ENCODE measurements at regions of chr9 and their contacts with region 1.

Region 1: DNA sequence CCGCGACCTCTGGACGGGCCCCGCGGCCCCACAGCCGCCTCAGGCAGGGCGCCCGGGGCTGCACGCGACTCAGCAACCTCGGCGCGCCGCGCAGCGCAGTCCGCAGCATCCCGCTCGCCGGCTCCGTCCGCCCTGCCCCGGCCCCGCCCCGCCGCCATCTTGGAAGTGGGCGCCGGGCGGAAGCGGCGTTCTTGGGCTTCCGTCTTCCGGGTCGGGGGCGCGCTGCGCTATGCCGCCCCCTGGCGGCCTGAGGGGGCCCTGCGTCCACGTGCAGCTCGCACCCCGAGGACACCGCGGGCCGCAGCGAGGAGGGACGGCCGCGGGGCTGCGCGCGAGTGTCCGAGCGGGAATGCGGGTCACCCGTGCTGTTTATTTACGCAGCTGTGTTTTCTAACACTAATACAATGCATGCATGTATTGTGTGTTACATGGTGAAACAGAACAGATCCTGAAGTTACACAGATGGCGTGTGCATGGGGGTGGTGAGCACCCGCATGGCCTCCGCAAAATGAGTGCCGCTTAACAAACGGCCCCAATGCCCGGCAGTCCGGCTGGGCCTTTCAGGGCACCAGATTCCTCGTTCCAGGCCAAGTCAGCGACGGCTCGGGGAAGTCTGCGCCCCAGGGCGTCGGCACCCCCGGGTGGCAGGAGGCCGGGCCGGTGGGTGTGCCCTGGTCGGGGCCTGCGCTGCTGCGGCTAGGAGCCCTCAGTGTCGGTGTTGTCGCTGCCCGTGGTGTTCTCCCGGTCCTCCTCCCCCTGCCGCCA is at the start of gene DNLZ:
- DNase-seq: peak; percentile 93
- ATAC-seq: peak; percentile 73
- H3K4me3 Mint-ChIP-seq: peak within 1 kb of the TSS; percentile 79
- H3K27ac Mint-ChIP-seq: peak within 1 kb of the TSS; percentile 80
- H3K4me1 Mint-ChIP-seq: peaks cover 10% of the 10 kb centered on the region
- H3K27me3 Mint-ChIP-seq: no peaks in the 10 kb centered on the region
- total RNA-seq, gene DNLZ: 11.7 to 12.8 TPM

Region 2: GRCh38 chr9:136089697-136090045 is 274.1 kb before region 1 on chr9:
- CTCF ChIA-PET with region 1: no interaction called
- POLR2A ChIA-PET with region 1: no interaction called
- intact Hi-C with region 1: no loop called
- DNase-seq: no peak
- ATAC-seq: no peak
- H3K4me3 Mint-ChIP-seq: no peak overlapping the region
- H3K27ac Mint-ChIP-seq: no peak overlapping the region
- H3K4me1 Mint-ChIP-seq: peaks cover 8% of the 10 kb centered on the region
- H3K27me3 Mint-ChIP-seq: no peaks in the 10 kb centered on the region

Region 3: DNA sequence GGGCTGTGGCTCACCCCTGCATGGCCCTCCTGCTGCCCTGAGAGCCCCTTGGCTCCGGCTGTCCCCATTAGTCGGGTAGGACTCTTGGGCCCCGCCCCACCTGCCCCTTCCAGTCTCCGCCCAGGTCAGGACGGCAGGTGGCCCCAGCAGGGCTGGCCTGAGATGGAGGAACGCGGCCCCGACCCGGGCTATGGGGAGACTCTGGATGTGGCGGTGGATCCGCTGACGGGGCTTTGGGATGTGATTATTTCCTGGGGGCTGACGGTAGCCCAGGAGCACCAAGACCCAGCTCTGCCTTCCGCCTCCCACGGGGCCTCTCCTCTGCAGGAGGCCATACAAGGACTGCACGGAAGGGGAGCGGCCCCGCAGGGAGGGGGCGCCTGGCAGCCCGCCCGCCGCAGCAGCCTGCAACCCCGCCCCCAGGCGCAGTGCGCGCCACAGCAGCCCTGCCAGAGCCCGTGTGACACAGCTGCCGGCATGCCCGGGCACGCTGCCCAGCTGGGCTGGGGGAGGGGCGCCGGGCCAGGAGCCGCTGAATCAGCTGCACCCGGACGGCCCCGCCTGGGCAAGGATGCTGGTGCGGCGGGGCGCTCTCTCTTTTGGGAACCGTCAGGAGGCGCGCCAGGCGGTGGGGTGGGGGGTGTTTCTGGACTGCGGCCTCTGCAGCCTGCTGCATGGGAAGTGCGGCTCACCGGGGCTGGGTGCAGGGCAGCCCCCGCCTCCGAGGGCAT is 254.3 kb before region 1 on chr9:
- CTCF ChIA-PET with region 1: no interaction called
- POLR2A ChIA-PET with region 1: no interaction called
- intact Hi-C with region 1: loop called (anchors 1 to 5 kb)
- DNase-seq: peak; percentile 97
- ATAC-seq: peak; percentile 88
- H3K4me3 Mint-ChIP-seq: peak overlapping the region; percentile 78
- H3K27ac Mint-ChIP-seq: peak overlapping the region; percentile 97
- H3K4me1 Mint-ChIP-seq: peaks cover 71% of the 10 kb centered on the region
- H3K27me3 Mint-ChIP-seq: no peaks in the 10 kb centered on the region

Region 4: DNA sequence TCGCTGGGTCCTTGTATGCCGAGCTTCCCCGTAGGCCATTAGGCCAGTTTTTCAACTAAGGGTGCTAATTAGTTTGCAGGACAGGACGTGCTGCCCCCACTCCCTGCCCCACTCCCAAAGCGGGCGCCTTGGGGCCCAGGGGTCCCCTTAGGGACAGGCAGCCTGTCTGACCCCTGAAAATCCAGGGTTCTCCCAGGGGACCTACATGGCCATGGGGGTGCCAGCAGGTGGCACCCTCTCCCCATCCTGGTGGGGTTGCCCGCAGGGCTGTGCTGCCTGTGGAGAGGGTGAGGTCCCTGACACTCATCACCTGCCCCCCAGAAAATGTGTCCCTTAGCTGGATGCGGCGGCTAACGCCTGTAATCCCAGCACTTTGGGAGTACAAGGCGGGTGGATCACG is 51.4 kb before region 1 on chr9:
- CTCF ChIA-PET with region 1: no interaction called
- POLR2A ChIA-PET with region 1: no interaction called
- intact Hi-C with region 1: loop called in 1 of 2 experiments (anchors 1 kb)
- DNase-seq: peak; percentile 74
- ATAC-seq: peak; percentile 80
- H3K4me3 Mint-ChIP-seq: no peak overlapping the region
- H3K27ac Mint-ChIP-seq: no peak overlapping the region
- H3K4me1 Mint-ChIP-seq: no peaks in the 10 kb centered on the region
- H3K27me3 Mint-ChIP-seq: no peaks in the 10 kb centered on the region

Region 5: GRCh38 chr9:136336156-136336870 is 27.5 kb before region 1 on chr9:
- CTCF ChIA-PET with region 1: no interaction called
- POLR2A ChIA-PET with region 1: no interaction called
- intact Hi-C with region 1: no loop called
- DNase-seq: no peak
- ATAC-seq: no peak
- H3K4me3 Mint-ChIP-seq: no peak overlapping the region
- H3K27ac Mint-ChIP-seq: no peak overlapping the region
- H3K4me1 Mint-ChIP-seq: no peaks in the 10 kb centered on the region
- H3K27me3 Mint-ChIP-seq: no peaks in the 10 kb centered on the region

Region 6: GRCh38 chr9:136410500-136411287 is 46.9 kb after region 1 on chr9 and contains the starts of genes ENTR1 and PMPCA:
- CTCF ChIA-PET with region 1: interaction called, 3 read pairs
- POLR2A ChIA-PET with region 1: no interaction called
- intact Hi-C with region 1: loop called in 1 of 2 experiments (anchors 1 kb)
- DNase-seq: peak; percentile 98
- ATAC-seq: peak; percentile 75
- H3K4me3 Mint-ChIP-seq: peak within 1 kb of the TSS; percentile 90
- H3K27ac Mint-ChIP-seq: peak within 1 kb of the TSS; percentile 94
- H3K4me1 Mint-ChIP-seq: peaks cover 49% of the 10 kb centered on the region
- H3K27me3 Mint-ChIP-seq: no peaks in the 10 kb centered on the region
- total RNA-seq, gene ENTR1: 57.2 to 67.7 TPM
- total RNA-seq, gene PMPCA: 88.0 to 113 TPM

Region 7: GRCh38 chr9:136527721-136528691 is 164.2 kb after region 1 on chr9:
- CTCF ChIA-PET with region 1: no interaction called
- POLR2A ChIA-PET with region 1: no interaction called
- intact Hi-C with region 1: no loop called
- DNase-seq: peak; percentile 41
- ATAC-seq: no peak
- H3K4me3 Mint-ChIP-seq: no peak overlapping the region
- H3K27ac Mint-ChIP-seq: no peak overlapping the region
- H3K4me1 Mint-ChIP-seq: peaks cover 24% of the 10 kb centered on the region
- H3K27me3 Mint-ChIP-seq: no peaks in the 10 kb centered on the region

Region 8: DNA sequence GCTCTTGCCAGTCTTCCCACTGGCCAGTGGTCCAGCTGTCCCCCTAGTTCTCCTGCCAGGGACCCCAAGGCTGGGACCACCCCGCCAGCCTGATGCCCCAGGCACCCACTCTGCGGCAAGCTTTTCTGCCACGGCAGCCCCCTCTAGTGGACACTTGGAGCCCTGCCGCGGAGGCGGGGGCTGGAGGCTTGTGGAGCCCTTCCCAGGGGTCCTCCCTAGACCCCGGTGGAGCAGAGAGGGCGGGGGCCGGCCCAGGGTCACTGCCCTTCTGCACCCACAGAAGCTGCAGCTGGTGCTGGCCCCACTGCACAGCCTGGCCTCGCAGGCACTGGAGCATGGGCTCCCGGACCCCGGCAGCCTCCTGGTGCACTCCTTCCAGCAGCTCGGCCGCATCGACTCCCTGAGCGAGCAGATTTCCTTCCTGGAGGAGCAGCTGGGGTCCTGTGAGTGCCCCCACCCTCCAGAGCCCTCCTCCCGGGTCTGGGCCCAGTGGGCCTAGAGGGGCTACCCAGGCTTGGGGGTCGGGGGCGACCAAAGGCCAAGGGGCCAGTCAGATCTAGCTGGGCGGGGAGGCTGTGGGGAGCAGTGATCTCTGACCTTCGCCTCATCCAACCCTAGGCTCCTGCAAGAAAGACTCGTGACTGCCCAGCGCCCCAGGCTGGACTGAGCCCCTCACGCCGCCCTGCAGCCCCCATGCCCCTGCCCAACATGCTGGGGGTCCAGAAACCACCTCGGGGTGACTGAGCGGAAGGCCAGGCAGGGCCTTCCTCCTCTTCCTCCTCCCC is 308.1 kb after region 1 on chr9:
- CTCF ChIA-PET with region 1: no interaction called
- POLR2A ChIA-PET with region 1: no interaction called
- intact Hi-C with region 1: no loop called
- DNase-seq: peak; percentile 70
- ATAC-seq: no peak
- H3K4me3 Mint-ChIP-seq: no peak overlapping the region
- H3K27ac Mint-ChIP-seq: no peak overlapping the region
- H3K4me1 Mint-ChIP-seq: no peaks in the 10 kb centered on the region
- H3K27me3 Mint-ChIP-seq: peaks cover 2% of the 10 kb centered on the region

Region 9: DNA sequence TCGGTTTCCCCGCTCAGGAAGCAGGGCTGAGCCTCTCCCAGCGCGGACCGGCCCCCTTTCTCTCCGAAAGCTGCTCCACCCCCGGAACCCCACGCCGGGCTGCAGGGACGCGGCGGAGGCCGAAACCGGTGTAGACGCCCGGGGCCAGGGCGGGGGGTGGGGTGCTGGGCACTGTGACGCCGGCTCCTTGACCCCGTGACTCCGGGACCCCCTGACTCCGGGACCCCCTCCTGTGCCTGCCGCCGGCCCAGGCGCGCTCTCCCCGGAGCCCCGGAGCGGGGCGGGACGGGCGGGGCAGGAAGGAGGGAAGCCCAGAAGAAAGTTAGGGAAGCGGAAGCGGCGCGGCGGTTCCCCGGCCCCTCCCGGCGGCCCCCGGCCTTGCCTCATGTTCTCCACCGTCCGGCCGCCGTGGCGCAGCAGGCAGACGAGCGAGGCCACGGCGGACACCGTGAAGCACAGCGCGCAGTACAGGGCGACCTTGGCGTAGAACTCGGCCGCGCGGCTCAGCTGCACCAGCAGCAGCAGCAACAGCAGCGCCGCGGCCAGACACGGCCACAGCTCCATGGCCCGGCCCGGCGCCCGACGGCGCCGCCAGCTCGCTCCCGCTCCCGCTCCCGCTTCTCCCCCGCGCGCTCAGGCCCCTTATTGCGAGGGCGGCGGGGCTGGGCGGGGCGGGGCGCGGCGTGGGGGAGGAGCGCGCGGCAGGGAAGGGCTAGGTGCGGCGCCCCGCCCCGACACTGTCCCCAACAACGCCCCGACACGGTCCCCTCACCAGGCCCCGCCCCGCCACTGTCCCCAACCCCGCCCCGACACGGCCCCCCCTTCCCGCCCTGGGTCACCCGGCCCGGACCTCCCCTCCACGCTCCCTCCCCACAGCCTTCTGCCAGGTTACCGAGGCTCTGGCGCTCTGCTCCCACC is 323.3 kb after region 1 on chr9 and contains the start of gene AGPAT2:
- CTCF ChIA-PET with region 1: no interaction called
- POLR2A ChIA-PET with region 1: no interaction called
- intact Hi-C with region 1: loop called in 1 of 2 experiments (anchors 1 kb)
- DNase-seq: peak; percentile 84
- ATAC-seq: peak; percentile 91
- H3K4me3 Mint-ChIP-seq: peak within 1 kb of the TSS; percentile 70
- H3K27ac Mint-ChIP-seq: no peak within 1 kb of the TSS
- H3K4me1 Mint-ChIP-seq: no peaks in the 10 kb centered on the region
- H3K27me3 Mint-ChIP-seq: peaks cover 2% of the 10 kb centered on the region
- total RNA-seq, gene AGPAT2: 9.0 to 10.4 TPM

Region 10: DNA sequence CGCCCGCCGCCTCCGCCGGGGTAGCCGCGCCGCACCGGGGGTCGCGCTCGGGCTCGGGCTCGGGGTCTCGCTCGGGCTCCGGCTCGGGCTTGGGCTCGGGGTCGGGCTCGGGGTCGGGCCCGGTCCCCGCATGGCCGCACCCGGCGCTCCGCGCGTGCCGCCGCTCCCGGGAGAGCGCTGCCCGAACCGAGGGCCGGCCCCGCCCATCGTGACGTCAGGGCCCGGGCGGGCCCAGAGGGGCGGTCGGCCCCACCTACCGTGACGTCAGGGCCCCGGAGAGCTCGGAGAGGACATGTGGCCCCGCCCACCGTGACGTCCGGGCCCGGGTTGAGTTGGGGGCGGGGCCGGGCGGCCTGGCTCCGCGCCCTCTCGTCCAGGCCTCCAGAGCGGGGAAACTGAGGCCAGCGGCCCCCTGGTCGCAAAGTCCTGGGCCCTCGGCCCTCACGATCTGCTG is 1095.4 kb after region 1 on chr9 and contains the start of gene NSMF:
- CTCF ChIA-PET with region 1: no interaction called
- POLR2A ChIA-PET with region 1: no interaction called
- intact Hi-C with region 1: loop called in 1 of 2 experiments (anchors 1 kb)
- DNase-seq: peak; percentile 98
- ATAC-seq: peak; percentile 66
- H3K4me3 Mint-ChIP-seq: peak within 1 kb of the TSS; percentile 39
- H3K27ac Mint-ChIP-seq: peak within 1 kb of the TSS; percentile 78
- H3K4me1 Mint-ChIP-seq: peaks cover 33% of the 10 kb centered on the region
- H3K27me3 Mint-ChIP-seq: no peaks in the 10 kb centered on the region
- total RNA-seq, gene NSMF: 63.6 to 65.0 TPM

Measured in activated CD4-positive, alpha-beta T cell treated with anti-CD3 and anti-CD28 coated beads for 36 hours (primary cell).